CD8-positive, alpha-beta T cell (primary cell): ENCODE measurements at regions of chr12 and their contacts with region 1.

Region 1: DNA sequence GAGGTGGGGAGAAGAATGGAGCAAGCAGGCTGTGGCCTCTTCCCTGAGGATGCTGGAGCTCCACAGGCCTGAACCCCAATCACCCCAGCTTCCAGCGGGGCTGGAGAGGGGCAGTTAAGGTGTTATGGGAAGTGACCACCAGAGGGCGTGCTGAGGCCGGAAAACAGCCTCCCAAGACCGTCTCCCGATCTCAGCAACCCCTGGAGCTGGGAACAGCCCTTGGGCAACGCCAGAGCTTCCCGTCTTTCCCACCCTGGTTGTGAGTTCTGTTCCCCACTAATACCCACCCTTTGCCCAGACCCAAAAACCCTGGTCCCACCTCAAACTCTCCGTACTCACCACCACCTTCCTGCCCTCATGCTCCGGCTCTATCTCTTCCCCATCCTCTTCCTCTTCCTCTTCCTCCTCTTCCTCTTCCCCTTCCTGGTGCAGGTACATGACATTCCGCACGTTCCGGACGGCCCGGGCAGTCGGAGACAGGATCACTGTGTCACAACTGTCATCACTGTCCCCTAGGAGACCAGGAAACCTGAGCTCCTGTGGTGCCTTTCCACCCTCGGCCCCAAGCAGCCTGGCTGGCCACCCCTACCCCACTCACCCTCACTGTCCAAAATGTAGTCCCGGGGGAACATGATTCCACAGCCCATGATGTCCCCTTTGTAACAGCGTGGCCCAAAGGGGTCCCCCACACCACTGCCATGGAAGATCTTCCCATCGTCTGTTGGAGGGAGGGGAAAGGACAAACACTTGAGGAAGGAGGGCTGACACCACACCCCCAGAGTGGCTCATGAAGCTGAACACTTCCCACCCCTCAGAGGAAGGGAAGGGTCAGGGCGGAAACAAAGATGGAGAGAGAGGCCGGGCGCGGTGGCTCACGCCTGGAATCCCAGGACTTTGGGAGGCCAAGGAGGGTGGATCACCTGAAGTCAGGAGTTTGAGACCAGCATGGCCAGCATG is 12.9 kb downstream of the SPRYD3 start:
- DNase-seq: peak; percentile 28 to 82 (median 73)
- ATAC-seq: peak; percentile 74
- H3K4me3 ChIP-seq: no peak overlapping the region
- H3K4me3 Mint-ChIP-seq: no peak overlapping the region
- H3K27ac ChIP-seq: no peak overlapping the region
- H3K27ac Mint-ChIP-seq: peak overlapping the region; percentile 34
- H3K4me1 ChIP-seq: no peaks in the 10 kb centered on the region
- H3K4me1 Mint-ChIP-seq: peaks cover 9% of the 10 kb centered on the region
- H3K27me3 ChIP-seq: no peaks in the 10 kb centered on the region
- H3K27me3 Mint-ChIP-seq: no peaks in the 10 kb centered on the region
- CTCF ChIP-seq: peak; percentile 80

Region 2: GRCh38 chr12:53054112-53054833 is 12.0 kb before region 1 on chr12:
- CTCF ChIA-PET with region 1: interaction called, 57 read pairs
- POLR2A ChIA-PET with region 1: interaction called, 4 read pairs
- intact Hi-C with region 1: no loop called
- DNase-seq: peak; percentile 81 to 97 (median 93)
- ATAC-seq: peak; percentile 92
- H3K4me3 ChIP-seq: peak overlapping the region; percentile 82 to 94
- H3K4me3 Mint-ChIP-seq: peak overlapping the region; percentile 94
- H3K27ac ChIP-seq: peak overlapping the region; percentile 51 to 57
- H3K27ac Mint-ChIP-seq: peak overlapping the region; percentile 91
- H3K4me1 ChIP-seq: peaks cover 7% of the 10 kb centered on the region
- H3K4me1 Mint-ChIP-seq: peaks cover 13% of the 10 kb centered on the region
- H3K27me3 ChIP-seq: no peaks in the 10 kb centered on the region
- H3K27me3 Mint-ChIP-seq: no peaks in the 10 kb centered on the region
- CTCF ChIP-seq: no peak

Region 3: GRCh38 chr12:53086361-53086760 is 20.1 kb after region 1 on chr12:
- CTCF ChIA-PET with region 1: interaction called, 92 read pairs
- POLR2A ChIA-PET with region 1: no interaction called
- intact Hi-C with region 1: no loop called
- DNase-seq: no peak
- ATAC-seq: no peak
- H3K4me3 ChIP-seq: no peak overlapping the region
- H3K4me3 Mint-ChIP-seq: no peak overlapping the region
- H3K27ac ChIP-seq: no peak overlapping the region
- H3K27ac Mint-ChIP-seq: no peak overlapping the region
- H3K4me1 ChIP-seq: no peaks in the 10 kb centered on the region
- H3K4me1 Mint-ChIP-seq: no peaks in the 10 kb centered on the region
- H3K27me3 ChIP-seq: no peaks in the 10 kb centered on the region
- H3K27me3 Mint-ChIP-seq: peaks cover 7% of the 10 kb centered on the region
- CTCF ChIP-seq: no peak

Region 4: GRCh38 chr12:53098982-53099651 is 32.9 kb after region 1 on chr12:
- CTCF ChIA-PET with region 1: interaction called, 366 read pairs
- POLR2A ChIA-PET with region 1: interaction called, 13 read pairs
- intact Hi-C with region 1: loop called (anchors 1 kb)
- DNase-seq: peak; percentile 70 to 94 (median 89)
- ATAC-seq: peak; percentile 61
- H3K4me3 ChIP-seq: no peak overlapping the region
- H3K4me3 Mint-ChIP-seq: peak overlapping the region; percentile 79
- H3K27ac ChIP-seq: peak overlapping the region in 1 of 2 experiments; percentile 23
- H3K27ac Mint-ChIP-seq: peak overlapping the region; percentile 84
- H3K4me1 ChIP-seq: peaks cover 52% of the 10 kb centered on the region
- H3K4me1 Mint-ChIP-seq: peaks cover 48% of the 10 kb centered on the region
- H3K27me3 ChIP-seq: no peaks in the 10 kb centered on the region
- H3K27me3 Mint-ChIP-seq: no peaks in the 10 kb centered on the region
- CTCF ChIP-seq: peak; percentile 98

Region 5: DNA sequence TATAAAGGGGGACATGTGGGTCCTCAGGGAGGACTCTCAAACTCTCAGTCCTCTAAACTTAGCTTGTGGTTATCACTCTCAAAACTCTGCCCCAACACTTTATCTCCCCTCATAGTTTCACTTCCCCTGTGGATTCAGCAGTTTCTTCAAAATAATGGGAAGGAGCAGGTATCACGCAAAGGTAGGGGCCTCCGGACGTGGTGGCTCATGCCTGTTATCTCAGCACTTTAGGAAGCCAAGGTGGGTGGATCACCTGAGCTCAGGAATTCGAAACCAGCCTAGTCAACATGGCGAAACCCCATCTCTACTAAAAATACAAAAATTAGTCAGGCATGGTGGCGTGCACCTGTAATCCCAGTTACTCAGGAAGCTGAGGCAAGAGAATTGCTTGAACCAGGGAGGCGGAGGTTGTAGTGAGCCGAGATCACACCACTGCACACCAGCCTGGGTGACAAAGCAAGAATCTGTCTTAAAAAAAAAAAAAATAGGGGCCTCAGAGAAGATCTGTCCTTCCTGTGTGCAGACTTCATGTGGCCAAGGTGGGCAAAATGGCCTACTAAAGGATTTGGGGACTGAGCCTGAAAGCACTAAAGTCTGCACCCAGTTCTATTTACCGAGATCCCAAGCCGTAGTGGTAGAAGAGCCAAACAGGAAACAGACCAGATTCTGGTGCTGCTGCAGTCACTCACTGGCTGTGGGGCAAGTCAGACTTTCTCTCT is 134.4 kb after region 1 on chr12:
- CTCF ChIA-PET with region 1: interaction called, 9 read pairs
- POLR2A ChIA-PET with region 1: interaction called, 3 read pairs
- intact Hi-C with region 1: loop called in 1 of 2 experiments (anchors 2 kb)
- DNase-seq: peak in 3 of 9 experiments; percentile 31 to 63 (median 49)
- ATAC-seq: peak; percentile 41
- H3K4me3 ChIP-seq: peak overlapping the region in 1 of 2 experiments; percentile 7
- H3K4me3 Mint-ChIP-seq: peak overlapping the region; percentile 73
- H3K27ac ChIP-seq: peak overlapping the region; percentile 14 to 30
- H3K27ac Mint-ChIP-seq: peak overlapping the region; percentile 93
- H3K4me1 ChIP-seq: peaks cover 89% of the 10 kb centered on the region
- H3K4me1 Mint-ChIP-seq: peaks cover 72% of the 10 kb centered on the region
- H3K27me3 ChIP-seq: no peaks in the 10 kb centered on the region
- H3K27me3 Mint-ChIP-seq: no peaks in the 10 kb centered on the region
- CTCF ChIP-seq: no peak